ENCODE measurements at regions of chr1 and their contacts with region 1.

Region 1: GRCh38 chr1:235328357-235329138 is at the start of gene GGPS1:
- DNase-seq: peak; percentile 94 to 95
- H3K4me3 ChIP-seq: peak within 1 kb of the TSS; percentile 82 to 95 (median 92)
- H3K27ac ChIP-seq: peak within 1 kb of the TSS; percentile 90
- H3K4me1 ChIP-seq: peaks cover 0 to 8% (median 1%) of the 10 kb centered on the region in 4 experiments; a peak in 3 of 7 replicates
- H3K27me3 ChIP-seq: no peaks in the 10 kb centered on the region
- CTCF ChIP-seq: no peak
- EP300 ChIP-seq: no peak
- POLR2A ChIP-seq: peak; percentile 90 to 93
- RAD21 ChIP-seq: 0 out of 4 replicates have a peak, but pooled peaks of 1 of the 2 experiments have one; percentile 6
- total RNA-seq, gene GGPS1: 40.4 and 43.6 TPM in 2 replicates

Region 2: DNA sequence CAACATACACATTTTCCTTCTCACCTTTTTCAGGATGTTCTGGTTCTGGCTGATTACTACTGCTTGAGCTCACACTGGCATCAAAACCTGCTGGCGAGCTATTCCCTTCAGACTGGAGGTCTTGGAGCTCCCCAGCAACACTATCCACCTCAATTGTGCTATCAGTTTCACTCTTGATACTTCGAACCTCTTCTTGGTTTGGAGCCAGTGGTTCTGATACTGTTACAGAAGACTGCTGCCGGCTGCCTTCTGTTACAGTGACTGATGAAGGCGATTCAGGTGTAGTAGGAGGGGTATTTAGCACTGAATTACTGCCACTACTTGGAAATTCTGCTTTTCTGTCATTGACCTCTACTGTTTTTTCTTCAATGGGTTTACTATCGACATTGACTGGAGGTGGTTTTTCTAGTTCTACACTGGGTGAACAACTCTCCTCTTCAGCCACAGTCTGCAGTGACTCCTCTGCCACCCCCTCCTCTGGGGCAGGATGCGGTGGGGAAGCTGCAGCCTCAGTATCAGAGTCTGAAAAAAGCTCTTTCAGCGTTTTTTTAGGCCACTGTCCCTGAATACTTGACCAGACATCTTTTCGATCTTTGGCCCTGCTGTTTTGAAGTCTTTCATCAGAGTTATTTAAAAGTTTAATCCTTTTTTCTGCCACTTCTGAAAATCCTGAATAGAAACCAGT is 146.8 kb before region 1 on chr1:
- CTCF ChIA-PET with region 1: no interaction called
- POLR2A ChIA-PET with region 1: no interaction called
- DNase-seq: no peak
- H3K4me3 ChIP-seq: no peak overlapping the region
- H3K27ac ChIP-seq: no peak overlapping the region
- H3K4me1 ChIP-seq: peaks cover 0 to 2% (median 0%) of the 10 kb centered on the region in 4 experiments; a peak in 1 of 7 replicates
- H3K27me3 ChIP-seq: no peaks in the 10 kb centered on the region
- CTCF ChIP-seq: no peak
- EP300 ChIP-seq: no peak
- POLR2A ChIP-seq: no peak
- RAD21 ChIP-seq: no peak

Region 3: DNA sequence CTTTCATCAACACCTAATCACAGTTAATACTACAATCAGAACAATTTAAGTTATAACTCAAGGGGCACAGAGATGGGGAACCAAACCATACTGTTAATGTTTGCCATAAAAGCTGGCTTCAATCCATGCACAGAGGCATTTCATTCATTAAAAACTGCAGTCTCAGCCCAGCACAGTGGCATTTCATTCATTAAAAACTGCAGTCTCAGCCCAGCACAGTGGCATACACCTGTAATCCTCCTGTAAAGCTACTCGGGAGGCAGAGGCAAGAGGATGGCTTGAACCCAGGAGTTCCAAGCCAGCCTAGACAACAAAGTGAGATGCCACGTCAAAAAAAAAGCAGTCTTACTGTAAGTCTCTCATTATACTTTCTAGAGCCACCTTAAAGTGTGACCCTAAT is 29.8 kb before region 1 on chr1:
- CTCF ChIA-PET with region 1: no interaction called
- POLR2A ChIA-PET with region 1: interaction called, 13 read pairs
- DNase-seq: no peak
- H3K4me3 ChIP-seq: no peak overlapping the region
- H3K27ac ChIP-seq: no peak overlapping the region
- H3K4me1 ChIP-seq: peaks cover 0 to 2% (median 0%) of the 10 kb centered on the region in 4 experiments; a peak in 2 of 7 replicates
- H3K27me3 ChIP-seq: no peaks in the 10 kb centered on the region
- CTCF ChIP-seq: no peak
- EP300 ChIP-seq: no peak
- POLR2A ChIP-seq: no peak
- RAD21 ChIP-seq: no peak

Region 4: DNA sequence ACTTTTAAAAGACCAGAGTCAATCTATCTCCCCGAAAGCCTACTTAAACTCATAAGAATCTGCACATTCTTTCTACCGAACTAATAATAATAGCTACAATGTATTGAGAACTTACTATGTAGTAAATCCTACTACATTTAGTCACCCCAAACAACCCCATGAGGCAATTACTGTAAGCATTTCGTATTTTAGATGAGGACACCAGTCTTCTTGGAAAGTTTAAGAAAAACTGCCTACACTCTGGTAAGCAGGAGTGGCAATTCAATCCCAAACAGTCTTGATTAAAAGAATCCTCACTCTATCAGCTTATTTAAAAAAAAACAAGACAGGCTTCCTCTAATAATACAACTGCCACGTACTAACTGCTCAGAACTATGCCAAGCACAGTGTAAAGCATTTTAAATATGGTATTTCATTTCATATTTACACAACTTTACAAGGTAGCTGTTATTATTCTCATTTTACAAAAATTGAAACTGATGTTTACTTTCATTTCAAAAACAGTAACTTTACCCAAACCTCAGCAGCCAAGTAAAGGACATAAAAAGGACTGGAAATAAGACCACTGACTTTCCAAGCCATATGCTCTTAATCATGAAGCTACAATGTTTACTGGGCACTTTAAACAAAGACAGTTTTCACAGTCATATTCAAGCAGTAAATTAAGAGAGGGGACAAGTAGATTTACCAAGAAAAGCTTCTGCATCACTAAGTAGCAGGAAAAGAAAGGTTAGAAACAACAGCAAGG is 14.4 kb before region 1 on chr1:
- CTCF ChIA-PET with region 1: interaction called, 4 read pairs
- POLR2A ChIA-PET with region 1: interaction called, 12 read pairs
- DNase-seq: no peak
- H3K4me3 ChIP-seq: no peak overlapping the region
- H3K27ac ChIP-seq: no peak overlapping the region
- H3K4me1 ChIP-seq: peaks cover 0 to 3% (median 0%) of the 10 kb centered on the region in 4 experiments; a peak in 2 of 7 replicates
- H3K27me3 ChIP-seq: no peaks in the 10 kb centered on the region
- CTCF ChIP-seq: no peak
- EP300 ChIP-seq: no peak
- POLR2A ChIP-seq: no peak
- RAD21 ChIP-seq: no peak

Region 5: GRCh38 chr1:235339746-235340445 is 11.3 kb after region 1 on chr1:
- CTCF ChIA-PET with region 1: interaction called, 3 read pairs
- POLR2A ChIA-PET with region 1: interaction called, 39 read pairs
- DNase-seq: no peak
- H3K4me3 ChIP-seq: no peak overlapping the region
- H3K27ac ChIP-seq: no peak overlapping the region
- H3K4me1 ChIP-seq: no peaks in the 10 kb centered on the region
- H3K27me3 ChIP-seq: no peaks in the 10 kb centered on the region
- CTCF ChIP-seq: no peak
- EP300 ChIP-seq: no peak
- POLR2A ChIP-seq: no peak
- RAD21 ChIP-seq: no peak

Region 6: DNA sequence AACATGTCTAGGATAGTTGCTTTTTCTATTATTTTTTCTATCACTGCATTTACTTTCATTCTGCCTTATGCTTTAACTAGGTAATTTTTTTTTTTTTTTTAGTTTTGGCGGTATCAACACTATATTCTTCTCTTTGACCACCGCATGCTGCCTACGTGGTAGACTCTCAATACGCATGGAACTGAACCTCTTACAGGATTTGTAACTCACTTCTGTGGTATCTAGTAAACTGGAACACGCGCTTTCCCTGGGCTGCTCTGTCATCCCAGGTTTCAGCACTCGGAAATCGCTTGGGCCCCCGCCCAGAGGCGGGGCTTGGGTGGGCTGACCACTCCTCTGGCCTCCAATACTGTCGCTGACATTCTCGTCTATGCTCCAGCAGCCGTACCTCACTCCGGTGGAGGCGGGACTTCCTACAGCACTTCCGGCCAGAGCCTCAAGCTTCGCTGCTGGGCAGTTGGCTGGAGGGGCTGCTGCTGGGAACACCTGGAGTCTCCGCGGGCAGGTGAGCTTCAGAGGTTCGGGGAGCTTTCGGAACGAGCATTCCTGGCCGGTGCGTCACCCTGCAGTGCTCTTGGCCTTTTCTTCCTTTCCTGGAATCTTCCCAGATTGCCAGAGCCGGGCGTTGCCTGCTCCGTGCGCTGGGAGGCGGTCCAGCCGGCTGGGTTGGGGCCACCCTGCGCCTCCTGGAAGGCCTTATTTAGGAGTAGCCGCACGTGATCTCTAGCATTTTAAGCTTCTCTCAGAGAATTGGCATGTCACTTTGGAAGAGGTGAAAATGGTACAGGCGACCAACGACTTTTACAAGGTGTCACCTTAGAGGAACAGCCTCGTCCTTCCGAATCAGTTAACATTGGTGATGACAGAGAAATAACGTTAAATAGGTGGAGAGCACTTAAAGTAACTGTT is 38.7 kb after region 1 on chr1 and contains the start of gene TBCE:
- CTCF ChIA-PET with region 1: no interaction called
- POLR2A ChIA-PET with region 1: interaction called, 12 read pairs
- DNase-seq: peak; percentile 95 to 96
- H3K4me3 ChIP-seq: peak within 1 kb of the TSS; percentile 61 to 86 (median 70)
- H3K27ac ChIP-seq: peak within 1 kb of the TSS; percentile 63
- H3K4me1 ChIP-seq: no peaks in the 10 kb centered on the region
- H3K27me3 ChIP-seq: no peaks in the 10 kb centered on the region
- CTCF ChIP-seq: peak in 1 of 3 experiments; percentile 11; a peak in 2 of 4 replicates
- EP300 ChIP-seq: peak in 1 of 2 experiments; percentile 6; a peak in 1 of 3 replicates
- POLR2A ChIP-seq: peak; percentile 89 to 98
- RAD21 ChIP-seq: peak; percentile 11; a peak in 2 of 4 replicates
- total RNA-seq, gene TBCE: 42.9 and 44.1 TPM in 2 replicates